MCF 10A (cell line): ENCODE measurements at regions of chr5 and their contacts with region 1.

Region 1: GRCh38 chr5:163408311-163408923 is 29.0 kb upstream of the CCNG1 start:
- DNase-seq: peak; percentile 81
- H3K4me3 Mint-ChIP-seq: no peak overlapping the region
- H3K27ac Mint-ChIP-seq: no peak overlapping the region
- H3K4me1 Mint-ChIP-seq: peaks cover 5% of the 10 kb centered on the region
- H3K27me3 Mint-ChIP-seq: peaks cover 17% of the 10 kb centered on the region
- CTCF ChIP-seq: peak; percentile 93

Region 2: DNA sequence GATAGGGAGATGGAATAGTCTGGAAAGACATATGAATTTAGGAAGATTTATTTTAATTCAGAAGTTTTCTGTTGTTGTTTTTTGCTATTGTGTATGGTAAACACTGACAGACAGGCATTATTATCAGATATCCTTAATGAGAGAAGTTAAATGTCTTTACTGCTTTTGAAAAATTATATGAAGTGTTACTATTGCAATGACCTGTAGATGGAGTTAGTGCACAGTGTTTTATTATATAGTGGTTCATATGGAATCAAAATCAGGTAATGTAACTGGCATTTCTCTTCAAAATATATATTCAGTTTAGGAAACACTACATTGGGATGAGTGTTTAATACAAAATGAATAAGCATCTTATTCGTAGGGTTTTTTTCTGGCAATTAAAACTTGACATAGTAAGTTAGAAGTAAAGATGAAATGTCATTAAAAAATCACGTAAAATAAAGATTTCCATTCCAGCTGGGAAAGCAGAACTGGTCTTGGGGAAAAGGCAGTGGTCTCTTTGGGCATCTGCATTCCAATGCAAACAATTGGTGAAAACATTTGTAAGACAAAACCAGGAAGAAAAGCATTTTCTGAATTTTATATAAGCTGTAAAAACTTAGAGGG is 1556.6 kb before region 1 on chr5:
- CTCF ChIA-PET with region 1: interaction called, 11 read pairs
- POLR2A ChIA-PET with region 1: interaction called, 5 read pairs
- intact Hi-C with region 1: loop called (anchors 1 kb)
- DNase-seq: peak; percentile 30
- H3K4me3 Mint-ChIP-seq: no peak overlapping the region
- H3K27ac Mint-ChIP-seq: no peak overlapping the region
- H3K4me1 Mint-ChIP-seq: no peaks in the 10 kb centered on the region
- H3K27me3 Mint-ChIP-seq: peaks cover 79% of the 10 kb centered on the region
- CTCF ChIP-seq: peak; percentile 45

Region 3: GRCh38 chr5:162209005-162209605 is 1199.3 kb before region 1 on chr5:
- CTCF ChIA-PET with region 1: interaction called, 3 read pairs
- POLR2A ChIA-PET with region 1: interaction called, 3 read pairs
- intact Hi-C with region 1: loop called (anchors 1 kb)
- DNase-seq: peak; percentile 83
- H3K4me3 Mint-ChIP-seq: no peak overlapping the region
- H3K27ac Mint-ChIP-seq: no peak overlapping the region
- H3K4me1 Mint-ChIP-seq: peaks cover 12% of the 10 kb centered on the region
- H3K27me3 Mint-ChIP-seq: no peaks in the 10 kb centered on the region
- CTCF ChIP-seq: peak; percentile 71

Region 4: DNA sequence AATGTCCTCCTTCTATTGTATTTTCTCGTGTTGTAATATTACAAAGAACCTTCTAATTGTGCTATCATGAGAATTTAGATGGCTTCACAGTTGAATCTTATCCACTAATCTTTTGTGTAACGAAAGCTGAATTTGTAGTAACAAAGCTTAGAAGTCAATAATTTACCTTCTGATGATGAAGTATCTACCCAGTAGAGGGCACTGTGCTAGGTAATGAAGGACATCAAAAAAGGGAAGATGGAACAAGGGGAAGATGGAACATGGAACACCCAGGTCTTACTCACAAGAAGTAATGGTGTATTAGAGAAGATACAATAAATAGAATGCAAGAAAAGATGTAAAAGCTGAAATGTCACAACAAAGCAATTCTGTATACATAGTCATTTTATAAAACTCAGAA is 102.0 kb before region 1 on chr5:
- CTCF ChIA-PET with region 1: interaction called, 10 read pairs
- POLR2A ChIA-PET with region 1: no interaction called
- intact Hi-C with region 1: loop called (anchors 1 kb)
- DNase-seq: peak; percentile 55
- H3K4me3 Mint-ChIP-seq: no peak overlapping the region
- H3K27ac Mint-ChIP-seq: no peak overlapping the region
- H3K4me1 Mint-ChIP-seq: no peaks in the 10 kb centered on the region
- H3K27me3 Mint-ChIP-seq: peaks cover 70% of the 10 kb centered on the region
- CTCF ChIP-seq: peak; percentile 33

Region 5: GRCh38 chr5:163387589-163388343 is 20.7 kb before region 1 on chr5:
- CTCF ChIA-PET with region 1: interaction called, 12 read pairs
- POLR2A ChIA-PET with region 1: interaction called, 4 read pairs
- intact Hi-C with region 1: no loop called
- DNase-seq: no peak
- H3K4me3 Mint-ChIP-seq: no peak overlapping the region
- H3K27ac Mint-ChIP-seq: no peak overlapping the region
- H3K4me1 Mint-ChIP-seq: no peaks in the 10 kb centered on the region
- H3K27me3 Mint-ChIP-seq: no peaks in the 10 kb centered on the region
- CTCF ChIP-seq: no peak

Region 6: GRCh38 chr5:163424836-163425235 is 16.4 kb after region 1 on chr5:
- CTCF ChIA-PET with region 1: interaction called, 17 read pairs
- POLR2A ChIA-PET with region 1: interaction called, 3 read pairs
- intact Hi-C with region 1: no loop called
- DNase-seq: no peak
- H3K4me3 Mint-ChIP-seq: no peak overlapping the region
- H3K27ac Mint-ChIP-seq: no peak overlapping the region
- H3K4me1 Mint-ChIP-seq: no peaks in the 10 kb centered on the region
- H3K27me3 Mint-ChIP-seq: no peaks in the 10 kb centered on the region
- CTCF ChIP-seq: no peak